Ovary (tissue), 10 donors: ENCODE measurements at regions of chr12 and their contacts with region 1.

Region 1: DNA sequence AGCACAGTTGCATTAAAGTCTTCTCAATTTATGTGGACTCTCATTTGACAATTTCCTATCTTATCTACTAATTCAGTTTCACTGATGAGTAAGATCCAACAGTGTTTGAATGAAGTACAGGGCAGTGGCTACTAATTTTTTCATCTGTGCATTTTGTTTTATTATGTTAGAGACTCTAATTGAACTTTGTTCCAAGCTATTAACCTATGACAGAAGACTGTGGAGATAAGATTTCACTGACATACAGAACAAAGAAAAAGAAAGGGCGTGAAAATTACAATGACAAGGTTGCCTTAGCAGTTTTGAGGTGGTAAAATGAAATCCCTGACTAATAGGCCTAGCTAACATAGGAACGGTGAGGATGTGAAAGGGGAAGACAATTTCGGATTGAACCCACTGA is 153.2 kb upstream of the SOX5 start:
- DNase-seq: no peak
- H3K4me3 ChIP-seq: no peak overlapping the region
- H3K27ac ChIP-seq: no peak overlapping the region
- H3K4me1 ChIP-seq: no peaks in the 10 kb centered on the region
- H3K27me3 ChIP-seq: no peaks in the 10 kb centered on the region
- CTCF ChIP-seq: no peak
- EP300 ChIP-seq: no peak
- POLR2A ChIP-seq: no peak

Region 2: DNA sequence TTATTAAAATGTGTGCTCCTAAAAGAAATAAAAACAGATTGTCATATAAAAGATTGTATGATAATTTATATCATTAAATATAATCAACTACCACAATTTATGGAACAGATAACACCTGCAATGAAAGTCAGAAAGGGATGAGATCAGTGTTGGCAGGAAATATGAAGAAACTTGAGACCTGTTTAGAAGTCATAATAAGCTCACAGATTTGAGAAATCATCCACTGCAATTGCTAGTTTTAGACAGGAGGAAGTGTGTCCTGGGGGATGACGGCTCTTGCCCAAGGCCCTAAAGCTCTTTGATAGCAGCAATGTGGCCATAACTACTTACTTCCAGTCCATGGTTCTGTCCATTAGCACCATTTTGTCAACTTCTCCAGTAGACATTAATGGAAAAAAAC is 30.4 kb before region 1 on chr12:
- intact Hi-C with region 1: loop called in 1 of 4 experiments (anchors 2 kb)
- DNase-seq: no peak
- H3K4me3 ChIP-seq: no peak overlapping the region
- H3K27ac ChIP-seq: no peak overlapping the region
- H3K4me1 ChIP-seq: no peaks in the 10 kb centered on the region
- H3K27me3 ChIP-seq: no peaks in the 10 kb centered on the region
- CTCF ChIP-seq: no peak
- EP300 ChIP-seq: no peak
- POLR2A ChIP-seq: no peak

Region 3: DNA sequence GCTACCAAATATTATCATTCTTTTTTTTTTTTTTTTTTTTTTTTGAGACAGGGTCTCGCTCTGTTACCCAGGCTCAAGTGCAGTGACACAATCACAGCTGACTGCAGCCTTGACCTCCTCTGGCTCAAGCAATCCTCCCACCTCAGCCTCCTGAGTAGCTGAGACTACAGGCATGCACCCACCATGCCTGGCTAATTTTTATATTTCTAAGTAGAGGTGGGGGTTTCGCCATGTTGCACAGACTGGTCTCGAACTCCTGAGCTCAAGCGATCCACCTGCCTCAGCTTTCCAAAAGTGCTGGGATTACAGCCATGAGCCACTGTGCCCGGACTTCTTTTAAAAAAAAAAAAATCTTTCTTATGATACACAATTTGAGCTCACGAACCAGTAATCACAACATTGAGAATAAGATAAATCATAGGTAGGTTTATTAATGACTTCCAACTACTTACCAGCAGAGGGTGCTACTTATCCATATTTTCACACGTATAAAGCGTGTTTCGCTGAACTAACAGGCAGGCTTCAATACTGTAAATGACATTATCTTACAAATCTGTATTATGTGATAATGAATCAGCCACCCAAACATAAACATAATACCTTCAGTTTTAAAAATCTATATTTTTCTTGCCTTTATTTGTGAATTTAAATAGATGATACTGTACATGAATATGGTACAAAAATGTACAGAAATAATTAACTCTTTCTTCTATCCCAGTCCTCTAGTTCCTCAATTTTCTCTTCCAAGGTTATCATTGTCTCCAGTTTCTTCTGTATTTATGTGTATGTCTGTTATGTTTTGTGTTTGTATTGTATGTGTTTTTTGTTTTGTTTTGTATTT is 888.8 kb after region 1 on chr12:
- intact Hi-C with region 1: no loop called
- DNase-seq: no peak
- H3K4me3 ChIP-seq: no peak overlapping the region
- H3K27ac ChIP-seq: no peak overlapping the region
- H3K4me1 ChIP-seq: no peaks in the 10 kb centered on the region
- H3K27me3 ChIP-seq: no peaks in the 10 kb centered on the region
- CTCF ChIP-seq: peak in 2 of 3 donors; percentile 40 to 68
- EP300 ChIP-seq: no peak
- POLR2A ChIP-seq: no peak